OCI-LY7 (cell line): ENCODE measurements at regions of chr1 and their contacts with region 1.

Region 1: DNA sequence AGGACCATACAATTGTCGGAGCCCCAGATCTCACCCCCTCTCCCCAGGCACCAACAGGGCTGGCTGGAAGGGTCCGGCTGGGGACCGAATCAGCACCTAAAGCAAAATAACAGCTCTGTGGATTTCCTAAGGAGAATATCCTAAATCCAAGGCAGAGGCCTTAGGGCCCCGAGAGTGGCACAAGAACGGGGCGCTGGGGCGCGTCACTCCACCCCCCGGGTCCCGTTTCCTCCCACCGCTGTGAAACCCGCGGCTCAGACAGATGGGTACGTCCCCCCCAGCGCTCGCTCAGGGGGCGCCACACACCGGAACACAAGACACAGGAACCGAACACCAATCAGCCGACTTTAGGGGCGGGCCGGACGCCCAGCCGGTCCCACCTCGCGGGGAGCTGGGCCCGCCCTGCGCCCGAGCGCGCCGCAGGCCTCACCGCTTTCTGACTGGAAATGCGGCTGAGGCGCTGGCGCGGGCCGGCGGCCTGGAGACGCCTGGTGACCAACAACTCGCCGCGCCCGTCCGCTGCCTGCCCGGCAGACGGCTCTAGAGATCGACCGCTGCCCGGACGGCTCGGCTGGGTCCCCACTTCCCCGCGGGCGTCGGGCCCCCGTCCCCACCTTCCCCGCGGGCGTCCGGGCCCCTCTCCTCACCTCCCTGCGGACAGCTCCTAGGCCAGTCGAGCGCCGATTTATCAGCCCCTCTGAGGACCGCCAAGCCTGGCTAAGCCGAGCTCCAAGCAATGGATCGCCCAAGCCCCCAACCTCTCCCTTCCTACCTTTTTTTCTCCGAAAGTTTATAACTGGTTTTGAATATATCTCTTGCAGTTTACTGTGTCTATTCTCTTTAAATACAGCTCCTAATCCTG is at the start of gene HFM1:
- DNase-seq: peak; percentile 86
- H3K4me3 ChIP-seq: peak within 1 kb of the TSS; percentile 71
- H3K27ac ChIP-seq: no peak within 1 kb of the TSS
- H3K4me1 ChIP-seq: peaks cover 8% of the 10 kb centered on the region
- CTCF ChIP-seq: peak; percentile 36
- total RNA-seq, gene HFM1: 0.41 and 1.3 TPM in 2 replicates

Region 2: DNA sequence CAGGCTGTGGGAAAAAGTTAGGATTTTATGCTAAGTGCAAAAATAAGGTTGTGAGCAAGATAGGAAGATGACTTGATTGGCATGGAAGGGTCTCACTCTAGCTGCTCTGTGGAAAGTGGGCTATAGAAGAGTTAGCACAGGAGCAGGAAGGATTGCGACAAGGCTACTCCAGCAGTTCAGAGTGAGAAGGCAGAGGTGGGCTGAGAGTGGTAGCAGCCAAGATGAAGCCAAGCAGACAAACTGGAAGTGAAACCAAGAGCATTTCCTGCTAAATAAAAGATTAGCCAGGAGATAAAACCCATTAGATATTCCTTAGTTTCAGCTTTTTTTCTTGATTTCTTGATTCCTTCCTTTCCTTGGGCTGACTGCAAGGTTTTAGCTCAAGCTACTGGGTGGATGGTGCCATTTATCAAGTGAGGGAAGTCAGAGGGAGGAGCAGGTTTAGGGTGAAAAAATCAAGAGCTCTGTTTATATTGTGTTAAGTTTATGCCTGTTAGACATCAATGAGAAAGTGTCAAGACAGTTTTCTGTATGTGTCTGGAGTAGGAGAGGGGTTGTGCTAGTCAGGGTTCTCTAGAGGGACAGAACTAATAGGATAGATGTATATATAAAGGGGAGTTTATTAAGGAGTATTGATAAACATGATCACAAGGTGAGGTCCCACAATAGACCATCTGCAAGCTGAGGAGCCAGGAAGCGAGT is 349.5 kb before region 1 on chr1:
- CTCF ChIA-PET with region 1: no interaction called
- POLR2A ChIA-PET with region 1: no interaction called
- intact Hi-C with region 1: no loop called
- DNase-seq: peak; percentile 76
- H3K4me3 ChIP-seq: peak overlapping the region; percentile 8
- H3K27ac ChIP-seq: peak overlapping the region; percentile 65
- H3K4me1 ChIP-seq: peaks cover 53% of the 10 kb centered on the region
- CTCF ChIP-seq: no peak

Region 3: DNA sequence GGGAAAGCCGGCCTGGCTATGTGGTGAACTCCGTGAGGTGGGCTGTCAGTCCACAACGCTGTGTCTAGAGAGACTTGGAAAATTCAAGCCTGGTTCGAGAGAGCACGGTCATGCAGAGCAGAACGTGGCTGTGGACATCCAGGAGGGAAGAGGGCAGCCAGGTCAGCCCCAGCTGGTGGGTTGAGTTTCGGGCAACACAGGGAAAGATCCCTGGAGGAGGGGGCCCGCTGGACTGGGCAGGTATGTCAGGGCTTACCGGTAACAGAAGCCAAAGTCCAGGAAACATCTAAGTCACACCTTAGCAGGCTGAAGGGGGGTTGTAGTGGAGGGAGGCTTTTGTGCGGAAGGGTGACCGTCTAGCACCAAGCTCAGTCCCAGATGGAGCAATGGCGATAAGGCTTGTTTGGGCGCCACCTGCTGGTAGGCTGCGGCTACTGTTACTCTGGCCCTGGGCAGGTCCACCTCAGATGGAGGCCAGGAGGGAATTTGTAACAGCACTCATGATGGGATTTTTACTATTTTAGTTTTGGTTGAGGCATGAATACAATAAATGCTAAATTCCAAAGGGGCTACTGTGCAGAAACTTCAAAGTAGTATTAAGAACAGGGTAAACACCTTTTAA is 239.2 kb before region 1 on chr1:
- CTCF ChIA-PET with region 1: no interaction called
- POLR2A ChIA-PET with region 1: no interaction called
- intact Hi-C with region 1: loop called (anchors 5 kb)
- DNase-seq: peak; percentile 61
- H3K4me3 ChIP-seq: no peak overlapping the region
- H3K27ac ChIP-seq: no peak overlapping the region
- H3K4me1 ChIP-seq: no peaks in the 10 kb centered on the region
- CTCF ChIP-seq: peak; percentile 96

Region 4: GRCh38 chr1:91282695-91283420 is 121.5 kb before region 1 on chr1:
- CTCF ChIA-PET with region 1: no interaction called
- POLR2A ChIA-PET with region 1: no interaction called
- intact Hi-C with region 1: loop called (anchors 2 kb)
- DNase-seq: peak; percentile 64
- H3K4me3 ChIP-seq: no peak overlapping the region
- H3K27ac ChIP-seq: no peak overlapping the region
- H3K4me1 ChIP-seq: no peaks in the 10 kb centered on the region
- CTCF ChIP-seq: peak; percentile 93

Region 5: GRCh38 chr1:91383456-91383855 is 20.9 kb before region 1 on chr1:
- CTCF ChIA-PET with region 1: no interaction called
- POLR2A ChIA-PET with region 1: no interaction called
- intact Hi-C with region 1: no loop called
- DNase-seq: no peak
- H3K4me3 ChIP-seq: no peak overlapping the region
- H3K27ac ChIP-seq: no peak overlapping the region
- H3K4me1 ChIP-seq: no peaks in the 10 kb centered on the region
- CTCF ChIP-seq: no peak

Region 6: GRCh38 chr1:91924146-91924545 is 519.8 kb after region 1 on chr1:
- CTCF ChIA-PET with region 1: no interaction called
- POLR2A ChIA-PET with region 1: no interaction called
- intact Hi-C with region 1: loop called (anchors 10 kb)
- DNase-seq: no peak
- H3K4me3 ChIP-seq: no peak overlapping the region
- H3K27ac ChIP-seq: no peak overlapping the region
- H3K4me1 ChIP-seq: no peaks in the 10 kb centered on the region
- CTCF ChIP-seq: no peak